ENCODE measurements at regions of chr17 and their contacts with region 1.

Region 1: DNA sequence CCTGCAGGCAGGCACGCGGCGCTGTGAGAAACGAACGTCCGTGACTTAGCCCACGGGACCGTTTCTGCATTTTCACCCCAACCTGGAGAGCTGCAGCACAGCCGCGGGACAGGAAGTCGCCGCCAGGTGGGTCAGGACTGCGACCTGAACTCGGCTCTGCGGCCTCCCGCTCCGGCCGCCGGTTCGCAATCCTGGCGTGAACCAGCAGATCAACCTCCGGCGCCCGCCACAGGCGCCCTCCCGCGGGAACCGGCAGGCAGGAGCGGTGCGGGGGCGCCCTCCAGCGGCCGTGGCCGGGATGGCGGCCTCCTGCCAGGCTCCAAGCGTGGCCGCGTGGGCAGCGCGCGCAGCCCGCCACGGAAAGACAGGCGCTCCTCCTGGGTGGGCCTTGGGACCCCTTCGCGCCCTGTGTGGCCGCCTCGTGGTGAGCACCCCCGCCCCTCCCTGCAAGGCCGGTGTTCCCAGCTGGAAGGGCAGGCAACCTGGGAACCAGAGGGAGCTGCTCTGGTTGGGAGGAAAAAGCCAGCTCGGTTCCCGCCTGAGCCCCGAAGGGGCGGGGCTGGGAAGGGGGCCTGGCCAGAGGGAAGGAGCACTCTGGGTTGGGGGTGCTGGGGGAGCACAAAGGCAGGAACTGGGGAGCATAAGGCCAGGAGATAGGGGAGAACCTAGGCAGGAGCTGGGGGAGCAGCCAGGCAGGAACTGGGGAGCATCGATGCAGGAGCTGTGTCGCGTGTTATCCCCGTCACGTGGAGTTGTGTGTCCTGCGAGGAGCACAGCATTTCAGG is 28.2 kb downstream of the ACTG1 start:
- DNase-seq: peak; percentile 97
- H3K4me3 ChIP-seq: peak overlapping the region; percentile 36 to 61
- H3K27ac ChIP-seq: no peak overlapping the region
- H3K4me1 ChIP-seq: peaks cover 6 to 51% of the 10 kb centered on the region in 2 experiments; a peak in 2 of 4 replicates
- H3K27me3 ChIP-seq: no peaks in the 10 kb centered on the region
- CTCF ChIP-seq: peak; percentile 95
- EP300 ChIP-seq: no peak
- RAD21 ChIP-seq: peak; percentile 98

Region 2: DNA sequence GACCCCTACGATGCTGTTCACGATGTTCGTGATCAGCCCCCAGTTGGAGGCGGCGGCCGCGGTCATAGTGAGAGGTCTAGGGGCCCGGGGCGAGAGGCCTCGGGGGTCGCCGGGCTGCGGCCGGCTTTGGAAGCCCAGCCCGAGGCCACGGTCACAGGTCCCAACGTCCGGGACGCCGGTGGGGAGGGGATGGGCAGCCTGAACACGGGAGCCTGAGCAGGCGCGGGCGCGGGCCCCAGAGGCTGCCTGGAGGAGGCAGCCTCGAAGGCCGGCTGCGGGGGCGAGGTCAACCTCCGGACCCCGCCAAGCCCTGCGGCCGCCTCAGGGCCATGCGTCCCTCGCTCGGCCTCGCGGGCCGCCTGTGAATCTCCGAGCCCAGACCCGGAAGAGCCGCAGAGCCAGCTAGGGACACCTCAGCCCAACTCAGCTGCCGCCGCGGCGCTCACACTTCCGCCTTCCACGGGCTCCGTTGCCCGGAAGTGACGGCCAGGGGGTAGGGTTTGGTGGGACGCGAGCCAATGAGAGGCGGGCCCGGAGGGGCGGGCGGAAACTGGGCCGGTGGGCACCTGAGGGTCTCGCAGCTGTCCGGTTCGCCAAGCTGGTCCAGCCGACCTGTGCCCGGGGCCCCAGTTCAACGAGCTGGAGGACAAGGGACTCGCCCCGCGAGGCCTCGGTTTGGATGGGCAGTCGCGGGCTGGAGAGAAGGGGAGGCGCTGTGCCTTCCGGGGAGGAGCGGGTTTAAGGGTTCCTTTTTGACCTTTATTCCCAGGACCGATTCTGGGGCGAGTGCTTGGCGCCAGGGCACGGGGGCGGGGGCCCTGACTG is 189.3 kb before region 1 on chr17 and contains the start of gene SLC38A10:
- CTCF ChIA-PET with region 1: interaction called, 43 read pairs
- POLR2A ChIA-PET with region 1: no interaction called
- DNase-seq: peak; percentile 100
- H3K4me3 ChIP-seq: peak within 1 kb of the TSS; percentile 76 to 88
- H3K27ac ChIP-seq: peak within 1 kb of the TSS; percentile 77 to 87
- H3K4me1 ChIP-seq: peaks cover 8 to 27% of the 10 kb centered on the region in 2 experiments; a peak in 2 of 4 replicates
- H3K27me3 ChIP-seq: no peaks in the 10 kb centered on the region
- CTCF ChIP-seq: peak; percentile 34; the same call in 1 of the 2 replicates
- EP300 ChIP-seq: peak in 1 of 2 experiments; percentile 30; a peak in 1 of 4 replicates
- RAD21 ChIP-seq: no peak
- polyA plus RNA-seq, gene SLC38A10: 64.3 and 82.2 TPM in 2 replicates

Region 3: DNA sequence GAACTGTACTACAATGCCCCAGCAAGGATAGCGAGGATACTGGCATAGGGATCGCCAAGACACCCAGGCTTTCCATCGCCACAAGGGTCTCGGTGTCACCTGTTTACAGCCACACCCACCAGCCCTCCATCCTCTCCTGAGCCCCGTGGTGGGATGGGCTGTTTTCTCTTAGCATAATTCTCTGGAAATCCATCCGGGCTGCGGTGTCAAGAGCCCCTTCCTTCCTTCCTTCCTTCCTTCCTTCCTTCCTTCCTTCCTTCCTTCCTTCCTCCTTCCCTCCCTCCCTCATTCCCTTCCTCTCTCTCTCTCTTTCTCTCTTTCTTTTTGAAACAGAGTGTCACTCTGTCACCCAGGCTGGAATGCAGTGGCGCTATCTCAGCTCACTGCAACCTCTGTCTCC is 125.2 kb before region 1 on chr17:
- CTCF ChIA-PET with region 1: interaction called, 11 read pairs
- POLR2A ChIA-PET with region 1: no interaction called
- DNase-seq: no peak
- H3K4me3 ChIP-seq: no peak overlapping the region
- H3K27ac ChIP-seq: no peak overlapping the region
- H3K4me1 ChIP-seq: no peaks in the 10 kb centered on the region
- H3K27me3 ChIP-seq: no peaks in the 10 kb centered on the region
- CTCF ChIP-seq: no peak
- EP300 ChIP-seq: no peak
- RAD21 ChIP-seq: no peak

Region 4: DNA sequence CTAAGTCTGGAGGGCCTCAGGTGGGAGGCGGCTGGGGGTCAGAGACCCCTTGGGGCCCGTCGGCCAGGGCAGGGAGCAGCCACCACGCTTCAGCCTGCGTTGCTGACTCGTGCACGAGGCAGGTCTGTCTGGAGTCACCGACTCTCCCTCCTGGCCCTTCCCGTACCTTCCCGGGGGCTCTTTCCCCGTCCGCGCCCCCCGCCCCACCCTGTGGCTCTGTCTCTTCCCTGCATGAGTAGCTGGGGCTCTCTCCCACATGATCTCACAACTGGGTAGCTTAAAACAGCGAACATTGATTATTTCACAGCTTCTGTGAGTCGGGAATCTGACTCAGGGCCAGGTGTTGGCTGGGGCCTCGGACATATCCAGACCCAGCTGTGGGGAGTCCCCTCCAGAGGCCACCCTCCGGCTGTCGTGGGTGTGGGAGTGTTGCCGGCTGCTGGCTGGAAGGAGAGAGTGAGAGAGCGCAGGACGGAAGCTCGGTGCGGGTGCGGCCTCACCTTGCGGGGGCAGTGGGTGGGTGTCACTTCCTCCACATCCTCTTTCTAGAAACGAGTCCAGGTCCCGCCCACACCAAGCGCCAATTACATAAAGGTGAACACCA is 71.8 kb before region 1 on chr17:
- CTCF ChIA-PET with region 1: interaction called, 13 read pairs
- POLR2A ChIA-PET with region 1: no interaction called
- DNase-seq: no peak
- H3K4me3 ChIP-seq: no peak overlapping the region
- H3K27ac ChIP-seq: no peak overlapping the region
- H3K4me1 ChIP-seq: peaks cover 10 to 13% of the 10 kb centered on the region in 2 experiments; a peak in 3 of 4 replicates
- H3K27me3 ChIP-seq: no peaks in the 10 kb centered on the region
- CTCF ChIP-seq: no peak
- EP300 ChIP-seq: no peak
- RAD21 ChIP-seq: no peak

Region 5: GRCh38 chr17:81445642-81446503 is 38.5 kb before region 1 on chr17:
- CTCF ChIA-PET with region 1: interaction called, 68 read pairs
- POLR2A ChIA-PET with region 1: no interaction called
- DNase-seq: no peak
- H3K4me3 ChIP-seq: no peak overlapping the region
- H3K27ac ChIP-seq: no peak overlapping the region
- H3K4me1 ChIP-seq: peaks cover 0 to 2% of the 10 kb centered on the region in 2 experiments; a peak in 1 of 4 replicates
- H3K27me3 ChIP-seq: no peaks in the 10 kb centered on the region
- CTCF ChIP-seq: no peak
- EP300 ChIP-seq: no peak
- RAD21 ChIP-seq: no peak

Region 6: DNA sequence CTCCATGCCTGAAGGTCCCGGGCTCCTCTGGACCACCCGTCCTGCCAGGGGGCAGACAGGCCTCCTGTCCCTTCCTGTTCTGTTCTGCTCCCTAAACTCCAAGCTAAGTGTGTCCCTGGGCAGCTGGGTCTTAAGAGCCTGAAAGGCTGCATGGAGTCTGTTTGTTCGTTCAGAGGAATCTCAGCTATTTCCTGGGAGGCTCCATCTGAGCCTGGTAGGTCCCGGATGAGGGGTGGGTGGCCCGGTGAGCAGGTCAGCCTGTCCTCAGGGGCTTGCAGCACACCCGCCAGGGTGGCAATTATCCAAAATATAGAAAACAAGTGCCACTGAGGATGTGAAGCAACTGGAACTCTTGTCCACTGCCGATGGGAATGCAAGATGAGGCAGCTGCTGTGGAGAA is 15.7 kb after region 1 on chr17:
- CTCF ChIA-PET with region 1: interaction called, 22 read pairs
- POLR2A ChIA-PET with region 1: no interaction called
- DNase-seq: no peak
- H3K4me3 ChIP-seq: no peak overlapping the region
- H3K27ac ChIP-seq: no peak overlapping the region
- H3K4me1 ChIP-seq: no peaks in the 10 kb centered on the region; a peak in 1 of 4 replicates
- H3K27me3 ChIP-seq: no peaks in the 10 kb centered on the region
- CTCF ChIP-seq: no peak
- EP300 ChIP-seq: no peak
- RAD21 ChIP-seq: no peak

Measured in SK-N-SH (cell line).